Activated naive CD4-positive, alpha-beta T cell treated with anti-CD3 and anti-CD28 coated beads for 36 hours (primary cell): ENCODE measurements at regions of chr6 and their contacts with region 1.

Region 1: DNA sequence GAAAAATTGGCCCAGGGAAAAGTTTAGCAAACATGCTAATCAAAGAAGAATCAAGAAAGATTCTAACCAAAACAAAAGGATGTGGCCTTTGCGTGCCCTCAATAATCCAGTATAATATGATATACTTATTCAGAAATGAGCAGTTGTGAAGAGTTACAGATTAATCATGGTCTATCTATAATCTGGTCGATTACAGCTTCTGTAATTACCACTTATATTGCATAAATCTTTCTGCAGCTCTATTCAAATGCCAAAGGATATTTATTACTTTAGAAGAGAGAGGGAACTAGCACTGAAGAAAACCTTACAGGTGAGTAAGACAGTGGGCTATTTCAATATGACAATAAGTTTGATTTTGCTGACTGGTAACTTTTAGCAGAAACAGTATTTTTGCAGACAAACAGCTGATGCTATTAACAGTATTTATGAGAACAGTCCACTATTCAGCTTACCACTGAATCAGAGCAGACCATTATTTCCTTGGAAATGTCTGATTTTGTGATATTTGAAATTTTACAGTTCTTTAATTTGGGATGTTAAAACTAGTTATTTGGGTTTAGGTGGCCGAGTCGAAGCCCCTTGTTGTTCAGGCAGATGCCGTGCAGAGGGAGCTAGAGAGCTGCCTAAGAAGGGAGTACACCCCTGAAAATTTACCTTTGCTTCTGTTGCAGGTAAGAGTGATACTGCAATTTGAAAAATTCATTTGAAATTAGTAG is 92.2 kb downstream of the CEP57L1 start:
- DNase-seq: peak; percentile 70
- H3K4me3 Mint-ChIP-seq: no peak overlapping the region
- H3K27ac Mint-ChIP-seq: no peak overlapping the region
- H3K4me1 Mint-ChIP-seq: no peaks in the 10 kb centered on the region
- H3K27me3 Mint-ChIP-seq: peaks cover 11% of the 10 kb centered on the region

Region 2: DNA sequence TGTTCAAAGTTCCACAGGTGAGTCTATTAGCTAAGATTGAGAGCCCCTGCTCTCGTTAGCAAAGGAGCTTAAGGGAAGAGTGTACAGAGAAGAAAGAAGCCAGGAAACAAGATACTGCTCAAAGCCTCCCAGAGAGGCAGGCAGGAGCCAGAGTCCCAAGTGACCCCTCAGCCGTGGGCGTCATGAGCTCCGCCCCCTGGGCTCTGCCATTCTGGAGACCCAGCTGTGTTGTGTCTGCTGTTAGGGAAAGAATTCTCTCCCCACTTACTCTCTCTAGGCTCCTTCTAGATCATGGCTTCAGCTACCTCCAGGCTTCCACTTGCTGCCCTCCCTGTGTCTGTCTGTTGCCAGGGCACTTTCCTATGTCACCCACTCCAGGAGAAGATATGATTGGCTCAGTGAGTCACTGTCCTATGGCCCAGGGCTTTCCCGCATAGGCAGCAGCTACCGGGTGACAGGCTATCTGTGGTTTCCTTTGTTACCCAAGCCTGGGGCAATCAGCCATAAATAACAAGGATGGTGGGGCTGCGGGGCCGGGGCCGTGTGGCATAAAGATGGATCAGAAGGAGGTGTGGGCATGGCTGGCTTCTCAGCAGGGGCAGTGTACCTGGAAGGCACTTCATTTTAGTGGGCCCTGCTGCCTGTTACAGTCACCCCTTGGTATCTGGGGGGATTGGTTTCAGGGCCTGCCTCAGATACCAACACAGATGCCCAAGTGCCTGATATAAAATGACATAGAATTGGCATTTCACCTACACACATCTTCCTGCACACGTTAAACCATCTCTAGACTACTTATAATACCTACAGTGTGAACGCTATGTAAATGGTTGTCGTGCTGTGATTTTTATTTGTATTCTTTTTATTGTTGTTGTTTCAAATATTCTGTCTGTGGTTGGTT is 220.5 kb before region 1 on chr6:
- CTCF ChIA-PET with region 1: no interaction called
- intact Hi-C with region 1: no loop called
- DNase-seq: peak; percentile 22
- H3K4me3 Mint-ChIP-seq: no peak overlapping the region
- H3K27ac Mint-ChIP-seq: no peak overlapping the region
- H3K4me1 Mint-ChIP-seq: peaks cover 2% of the 10 kb centered on the region
- H3K27me3 Mint-ChIP-seq: no peaks in the 10 kb centered on the region

Region 3: DNA sequence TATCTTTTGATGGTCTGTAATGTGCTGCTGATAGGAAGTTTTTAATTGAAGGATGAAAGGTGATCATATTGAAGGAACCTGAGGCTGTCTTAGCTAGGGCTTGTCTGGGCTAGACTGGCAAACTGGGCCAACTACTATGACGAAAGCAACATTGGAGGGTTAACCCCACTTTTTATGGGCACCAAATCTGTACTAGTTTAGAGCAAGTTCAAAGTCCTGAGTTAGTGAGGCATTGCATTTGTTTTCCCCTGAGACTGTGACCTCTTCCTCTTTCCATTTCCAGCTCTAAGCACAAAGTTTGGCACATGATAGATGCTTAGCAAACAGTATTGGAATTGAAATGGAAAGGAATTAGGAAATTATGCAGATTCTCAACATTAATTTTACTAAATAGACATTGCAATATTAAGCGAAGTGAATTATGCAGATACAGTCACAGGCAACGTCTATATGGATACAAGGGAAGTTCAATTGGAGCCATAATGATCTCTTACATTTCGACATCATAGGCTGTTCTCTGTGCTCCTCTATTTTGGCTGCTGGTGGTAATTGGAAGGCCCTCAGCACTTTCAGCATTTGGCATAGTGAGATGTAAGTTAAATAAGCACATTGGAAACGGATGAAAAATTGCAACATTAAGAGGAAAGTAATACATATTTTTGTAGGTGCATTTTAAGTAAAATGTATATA is 70.1 kb before region 1 on chr6:
- CTCF ChIA-PET with region 1: no interaction called
- intact Hi-C with region 1: no loop called
- DNase-seq: no peak
- H3K4me3 Mint-ChIP-seq: no peak overlapping the region
- H3K27ac Mint-ChIP-seq: no peak overlapping the region
- H3K4me1 Mint-ChIP-seq: peaks cover 15% of the 10 kb centered on the region
- H3K27me3 Mint-ChIP-seq: no peaks in the 10 kb centered on the region

Region 4: GRCh38 chr6:109202409-109203284 is 15.1 kb after region 1 on chr6:
- CTCF ChIA-PET with region 1: interaction called, 15 read pairs
- intact Hi-C with region 1: no loop called
- DNase-seq: peak; percentile 62
- H3K4me3 Mint-ChIP-seq: no peak overlapping the region
- H3K27ac Mint-ChIP-seq: no peak overlapping the region
- H3K4me1 Mint-ChIP-seq: peaks cover 7% of the 10 kb centered on the region
- H3K27me3 Mint-ChIP-seq: no peaks in the 10 kb centered on the region

Region 5: GRCh38 chr6:109236115-109237076 is 48.8 kb after region 1 on chr6:
- CTCF ChIA-PET with region 1: interaction called, 9 read pairs
- intact Hi-C with region 1: loop called (anchors 1 kb)
- DNase-seq: peak; percentile 53
- H3K4me3 Mint-ChIP-seq: peak overlapping the region; percentile 11
- H3K27ac Mint-ChIP-seq: no peak overlapping the region
- H3K4me1 Mint-ChIP-seq: peaks cover 11% of the 10 kb centered on the region
- H3K27me3 Mint-ChIP-seq: no peaks in the 10 kb centered on the region

Region 6: DNA sequence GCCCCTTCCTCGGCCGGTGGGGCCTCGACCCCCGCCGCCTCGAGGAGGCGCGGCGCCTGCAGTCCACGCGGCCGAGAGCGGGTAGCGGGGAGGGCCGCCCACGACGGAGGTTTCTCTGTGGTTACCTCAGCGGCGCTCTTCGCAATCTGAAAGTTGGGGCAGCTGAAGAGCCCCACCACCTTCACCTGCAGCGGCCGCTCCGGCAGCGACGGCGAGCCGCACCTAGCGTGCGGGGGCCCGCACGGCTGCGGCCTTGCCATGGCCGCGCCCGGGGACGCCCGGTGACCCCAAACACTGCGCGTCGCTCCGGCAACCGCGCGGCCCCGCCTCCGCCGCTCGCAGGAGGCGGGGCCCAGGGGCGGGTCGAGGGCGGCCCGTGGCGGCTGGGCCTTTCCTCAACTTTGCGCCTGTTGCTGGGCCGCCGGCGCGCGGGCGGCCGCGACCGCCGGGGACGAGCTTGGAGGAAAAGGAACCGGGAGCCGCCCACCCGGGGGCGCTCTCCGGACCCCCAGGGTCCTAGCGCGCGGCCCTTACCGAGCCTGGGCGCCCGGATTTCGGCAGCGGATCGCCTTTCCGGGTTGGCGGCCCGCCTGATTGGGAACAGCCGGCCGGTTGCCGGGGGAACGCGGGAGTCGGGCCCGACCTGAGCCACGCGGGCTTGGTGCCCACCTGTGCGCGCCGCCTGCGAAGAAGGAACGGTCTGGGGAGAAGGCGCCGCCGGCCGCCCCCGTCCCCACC is 252.9 kb after region 1 on chr6 and contains the starts of genes PPIL6 and SMPD2:
- CTCF ChIA-PET with region 1: interaction called, 6 read pairs
- intact Hi-C with region 1: loop called (anchors 2 kb)
- DNase-seq: peak; percentile 76
- H3K4me3 Mint-ChIP-seq: peak within 1 kb of the TSS; percentile 94
- H3K27ac Mint-ChIP-seq: peak within 1 kb of the TSS; percentile 87
- H3K4me1 Mint-ChIP-seq: peaks cover 27% of the 10 kb centered on the region
- H3K27me3 Mint-ChIP-seq: no peaks in the 10 kb centered on the region
- total RNA-seq, gene PPIL6: 0.19 TPM in 1 of 2 experiments, not detected in the other
- total RNA-seq, gene SMPD2: 9.4 to 9.7 TPM

Region 7: DNA sequence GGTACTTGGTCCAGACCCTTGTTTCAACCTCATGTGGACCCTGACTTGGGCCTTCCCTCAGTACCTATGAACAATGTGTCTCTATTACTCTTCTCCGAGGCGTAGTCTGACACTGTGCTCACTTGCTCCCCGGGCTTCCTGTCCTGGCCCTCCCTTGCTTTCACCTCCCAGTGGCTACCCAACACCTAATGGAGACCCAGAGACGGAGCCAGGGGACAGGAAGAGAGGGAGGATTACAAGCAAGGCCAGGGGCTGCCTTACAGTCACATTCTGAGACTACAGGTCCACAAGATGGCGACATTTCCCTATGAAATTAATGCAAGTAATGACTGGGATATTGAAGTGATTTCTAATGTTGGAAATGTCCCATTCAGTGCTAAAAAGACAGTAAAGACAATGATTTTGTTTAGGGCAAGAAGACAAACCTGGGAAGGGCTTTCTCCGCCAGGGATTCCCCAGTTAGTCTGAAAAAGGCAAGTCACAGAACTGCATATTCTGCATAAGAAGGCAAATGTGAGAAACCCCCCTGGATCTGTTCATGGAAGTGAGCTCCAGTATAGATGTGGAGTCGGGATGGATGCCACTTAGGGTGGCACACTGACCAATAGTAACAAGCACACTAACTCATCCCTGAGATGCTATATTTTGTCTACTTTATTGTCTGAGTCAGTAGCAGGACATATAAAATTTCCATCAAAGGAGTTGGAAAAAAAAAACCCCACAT is 339.5 kb after region 1 on chr6:
- CTCF ChIA-PET with region 1: no interaction called
- intact Hi-C with region 1: loop called (anchors 5 kb)
- DNase-seq: peak; percentile 70
- H3K4me3 Mint-ChIP-seq: no peak overlapping the region
- H3K27ac Mint-ChIP-seq: no peak overlapping the region
- H3K4me1 Mint-ChIP-seq: peaks cover 2% of the 10 kb centered on the region
- H3K27me3 Mint-ChIP-seq: no peaks in the 10 kb centered on the region

Region 8: DNA sequence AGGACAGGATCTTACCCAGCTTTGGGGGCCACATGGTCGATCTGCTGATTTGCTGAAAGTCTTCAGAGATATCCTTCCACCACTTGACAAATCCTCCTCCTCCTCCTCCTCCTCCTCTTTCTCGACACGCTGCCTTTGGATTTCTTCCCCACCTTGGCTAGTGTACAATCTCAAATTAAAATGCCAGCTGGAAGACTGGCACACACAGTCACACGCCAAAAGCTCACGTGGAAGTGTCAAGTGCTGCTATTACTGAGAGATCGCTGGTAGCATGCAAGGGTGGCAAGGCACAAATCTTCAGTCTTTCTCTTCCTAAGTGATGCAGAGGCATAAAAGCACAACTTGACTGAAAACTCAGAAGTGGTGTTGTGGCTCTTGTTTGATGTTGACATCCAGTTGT is 825.8 kb after region 1 on chr6:
- CTCF ChIA-PET with region 1: no interaction called
- intact Hi-C with region 1: no loop called
- DNase-seq: no peak
- H3K4me3 Mint-ChIP-seq: no peak overlapping the region
- H3K27ac Mint-ChIP-seq: no peak overlapping the region
- H3K4me1 Mint-ChIP-seq: no peaks in the 10 kb centered on the region
- H3K27me3 Mint-ChIP-seq: no peaks in the 10 kb centered on the region